ENCODE measurements at regions of chr9 and their contacts with region 1.

Region 1: DNA sequence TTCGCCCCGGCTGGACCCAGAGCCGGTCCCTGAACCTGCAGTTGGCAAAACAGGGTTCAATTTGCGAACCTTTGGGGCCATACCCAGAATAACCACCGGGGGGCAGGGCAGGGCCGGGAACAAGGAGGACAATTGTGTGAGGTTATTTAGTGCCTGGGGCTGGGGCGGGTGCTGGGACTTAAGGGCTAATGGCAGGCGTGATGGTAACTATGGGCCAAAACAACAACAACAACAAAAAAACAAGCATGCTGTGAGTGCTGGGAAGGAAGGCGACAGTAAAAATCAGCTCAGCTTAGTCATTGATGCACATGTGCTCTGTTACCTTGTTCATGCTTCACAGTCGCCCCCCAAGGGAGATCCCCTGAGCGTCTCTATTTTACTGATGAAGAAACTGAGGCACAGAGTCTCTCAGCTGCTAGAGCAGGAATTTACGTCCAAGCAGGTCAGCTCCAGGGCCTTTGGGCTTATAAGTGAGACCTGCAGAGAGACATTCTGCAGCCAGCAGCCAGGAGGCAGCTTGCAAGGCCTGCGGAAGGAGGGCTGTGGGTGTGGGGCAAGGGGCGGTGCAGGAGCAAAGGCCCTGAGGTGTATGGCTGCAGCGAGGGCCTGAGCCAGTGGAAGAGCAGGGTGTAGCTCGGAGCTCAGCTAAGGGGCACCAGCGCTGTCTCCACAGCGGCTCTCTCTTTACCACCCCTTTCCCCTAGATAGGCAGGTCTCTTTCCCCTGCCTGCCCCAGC is 106.0 kb downstream of the PHF2 start:
- DNase-seq: peak; percentile 68
- ATAC-seq: peak; percentile 59
- H3K4me3 Mint-ChIP-seq: no peak overlapping the region
- H3K27ac Mint-ChIP-seq: no peak overlapping the region
- H3K4me1 Mint-ChIP-seq: no peaks in the 10 kb centered on the region
- H3K27me3 Mint-ChIP-seq: no peaks in the 10 kb centered on the region

Region 2: DNA sequence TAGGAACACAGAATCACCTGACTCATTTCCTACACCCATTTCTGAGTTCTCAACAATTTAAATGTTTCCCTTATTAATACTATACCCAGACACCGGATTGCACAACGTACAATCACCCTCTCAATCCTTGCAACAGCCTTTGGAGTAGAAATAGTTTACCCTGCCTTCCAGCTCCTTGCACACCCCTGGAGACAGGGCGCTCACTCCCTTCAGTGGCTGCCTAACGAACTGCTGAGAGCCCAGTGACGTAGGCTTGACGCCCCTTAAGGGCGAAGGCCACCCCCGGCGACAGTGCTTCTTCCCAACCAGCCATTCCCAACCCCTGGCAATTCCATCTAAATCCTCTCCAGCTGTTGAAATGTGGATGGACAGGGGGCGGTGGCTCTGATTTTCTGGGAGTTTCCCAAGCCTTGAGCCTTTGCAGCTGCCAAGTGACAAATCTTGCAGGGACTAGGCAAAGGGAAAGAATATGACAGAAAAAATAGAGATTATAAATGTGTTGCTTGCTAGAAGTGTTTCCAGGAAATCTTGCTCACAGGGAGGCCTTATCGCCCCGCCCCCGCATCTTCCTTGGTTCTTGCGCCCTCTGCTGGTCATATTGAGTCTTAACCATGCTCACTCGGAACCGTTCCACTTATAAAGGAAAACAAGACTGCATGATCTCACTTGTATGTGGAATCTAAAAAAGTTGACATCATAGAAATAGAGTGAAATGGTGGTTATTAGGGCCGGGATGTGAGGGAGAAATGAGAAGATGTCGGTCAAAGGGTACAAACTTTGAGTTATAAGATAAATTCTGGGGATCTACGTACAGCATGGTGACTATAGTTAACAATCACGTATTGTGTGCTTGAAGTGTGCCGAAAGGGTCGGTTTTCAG is 280.4 kb after region 1 on chr9:
- CTCF ChIA-PET with region 1: interaction called, 34 read pairs
- DNase-seq: peak; percentile 83
- ATAC-seq: peak; percentile 70
- H3K4me3 Mint-ChIP-seq: no peak overlapping the region
- H3K27ac Mint-ChIP-seq: no peak overlapping the region
- H3K4me1 Mint-ChIP-seq: peaks cover 21% of the 10 kb centered on the region
- H3K27me3 Mint-ChIP-seq: peaks cover 58% of the 10 kb centered on the region

Measured in activated CD8-positive, alpha-beta memory T cell treated with anti-CD3 and anti-CD28 coated beads, Interleukin-2, amount 10 ng/mL, durations not matched to agents 7 days and 5 days (primary cell).